Endothelial cell of umbilical vein (primary cell): ENCODE measurements at regions of chr6 and their contacts with region 1.

Region 1: GRCh38 chr6:16377470-16377869 is 139.1 kb downstream of the GMPR start:
- DNase-seq: no peak
- H3K4me3 ChIP-seq: no peak overlapping the region
- H3K27ac ChIP-seq: no peak overlapping the region
- H3K4me1 ChIP-seq: no peaks in the 10 kb centered on the region
- H3K27me3 ChIP-seq: no peaks in the 10 kb centered on the region
- CTCF ChIP-seq: no peak
- POLR2A ChIP-seq: no peak

Region 2: GRCh38 chr6:15602154-15602553 is 775.3 kb before region 1 on chr6:
- CTCF ChIA-PET with region 1: no interaction called
- POLR2A ChIA-PET with region 1: no interaction called
- dilution Hi-C with region 1: no loop called
- intact Hi-C with region 1: no loop called
- DNase-seq: no peak
- H3K4me3 ChIP-seq: no peak overlapping the region
- H3K27ac ChIP-seq: no peak overlapping the region
- H3K4me1 ChIP-seq: no peaks in the 10 kb centered on the region
- H3K27me3 ChIP-seq: no peaks in the 10 kb centered on the region
- CTCF ChIP-seq: no peak
- POLR2A ChIP-seq: no peak

Region 3: DNA sequence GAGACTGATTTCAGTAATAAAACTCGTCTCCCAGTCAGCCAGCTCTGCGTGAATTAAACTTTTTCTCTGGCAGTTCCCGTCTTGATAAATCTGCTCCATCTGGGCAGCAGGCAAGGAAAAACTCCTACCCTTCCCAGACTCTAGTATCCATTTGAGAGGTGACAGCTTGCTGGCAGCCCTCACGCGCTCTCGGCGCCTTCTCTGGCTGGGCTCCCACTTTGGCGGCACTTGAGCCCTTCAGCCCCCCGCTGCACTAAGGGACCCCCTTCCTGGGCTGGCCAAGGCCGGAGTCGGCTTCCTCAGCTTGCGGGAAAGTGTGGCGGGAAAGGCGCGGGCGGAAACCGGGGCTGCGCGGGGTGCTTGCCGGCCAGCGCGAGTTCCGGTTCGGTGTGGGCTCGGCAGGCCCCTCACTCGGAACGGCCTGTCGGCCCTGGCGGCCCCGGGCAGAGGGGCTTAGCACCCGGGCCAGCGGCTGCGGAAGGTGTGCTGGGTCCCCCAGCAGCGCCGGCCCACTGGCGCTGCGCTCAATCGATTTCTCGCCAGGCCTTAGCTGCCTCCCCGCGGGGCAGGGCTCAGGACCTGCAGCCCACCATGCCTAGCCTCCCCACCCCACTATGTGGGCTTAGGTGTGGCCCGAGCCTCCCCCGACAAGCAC is 160.8 kb before region 1 on chr6:
- CTCF ChIA-PET with region 1: no interaction called
- POLR2A ChIA-PET with region 1: no interaction called
- dilution Hi-C with region 1: no loop called
- intact Hi-C with region 1: no loop called
- DNase-seq: peak; percentile 41
- H3K4me3 ChIP-seq: no peak overlapping the region
- H3K27ac ChIP-seq: peak overlapping the region; percentile 99
- H3K4me1 ChIP-seq: peaks cover 28% of the 10 kb centered on the region
- H3K27me3 ChIP-seq: no peaks in the 10 kb centered on the region
- CTCF ChIP-seq: no peak
- POLR2A ChIP-seq: no peak

Region 4: GRCh38 chr6:16345437-16346330 is 31.8 kb before region 1 on chr6:
- CTCF ChIA-PET with region 1: no interaction called
- POLR2A ChIA-PET with region 1: no interaction called
- dilution Hi-C with region 1: no loop called
- intact Hi-C with region 1: no loop called
- DNase-seq: peak; percentile 89
- H3K4me3 ChIP-seq: no peak overlapping the region
- H3K27ac ChIP-seq: peak overlapping the region; percentile 31
- H3K4me1 ChIP-seq: peaks cover 17% of the 10 kb centered on the region
- H3K27me3 ChIP-seq: no peaks in the 10 kb centered on the region
- CTCF ChIP-seq: no peak
- POLR2A ChIP-seq: no peak

Region 5: GRCh38 chr6:16391451-16391912 is 14.0 kb after region 1 on chr6:
- CTCF ChIA-PET with region 1: interaction called, 3 read pairs
- POLR2A ChIA-PET with region 1: interaction called, 10 read pairs
- dilution Hi-C with region 1: no loop called
- intact Hi-C with region 1: no loop called
- DNase-seq: peak; percentile 35
- H3K4me3 ChIP-seq: no peak overlapping the region
- H3K27ac ChIP-seq: no peak overlapping the region
- H3K4me1 ChIP-seq: no peaks in the 10 kb centered on the region
- H3K27me3 ChIP-seq: no peaks in the 10 kb centered on the region
- CTCF ChIP-seq: no peak
- POLR2A ChIP-seq: no peak